ENCODE measurements at regions of chr6 and their contacts with region 1.

Region 1: DNA sequence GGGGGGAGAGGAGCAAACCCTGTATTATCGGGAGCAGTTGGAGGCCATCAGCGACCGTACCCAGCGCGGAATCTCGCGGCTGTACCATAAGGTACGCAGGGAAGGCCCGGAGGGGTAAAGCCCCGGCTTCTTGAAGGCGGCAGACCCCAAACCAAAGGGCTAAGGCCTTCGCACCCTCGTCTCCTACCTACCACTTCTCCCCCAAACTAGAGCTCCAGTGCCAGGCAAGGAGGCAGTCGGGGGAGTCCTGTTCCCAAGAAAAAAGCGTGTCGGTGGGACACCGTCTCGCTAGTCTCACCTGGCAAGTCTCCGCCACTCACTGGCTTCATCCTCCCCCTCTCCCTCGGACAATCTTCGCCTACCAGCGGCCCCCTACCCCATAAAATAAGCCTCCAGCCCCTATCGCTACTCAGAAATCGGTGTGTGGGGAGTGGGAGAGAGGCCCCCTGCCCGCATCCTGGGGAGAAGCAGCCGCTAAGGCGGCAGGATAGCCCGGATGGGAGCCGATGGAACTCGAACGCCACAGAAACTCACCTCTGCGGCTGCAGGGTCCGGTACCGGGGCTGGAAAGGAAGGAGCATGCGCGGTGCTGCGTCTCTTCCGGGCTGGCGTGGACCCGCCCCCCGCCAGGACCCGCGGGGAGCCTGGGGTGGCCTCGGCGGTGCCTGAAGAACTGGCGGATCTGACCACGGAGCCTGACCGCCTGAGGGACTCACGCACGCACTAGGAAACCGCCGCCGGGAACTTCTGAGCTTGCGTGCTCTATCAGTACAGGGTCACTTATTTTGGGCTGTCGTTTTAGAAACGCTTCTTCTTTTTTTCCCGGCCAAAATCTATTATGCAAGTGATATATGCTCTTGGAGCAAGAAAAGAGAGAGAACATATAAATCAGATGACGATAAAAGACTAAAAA is at the start of gene RPS10:
- DNase-seq: peak; percentile 90 to 97 (median 93)
- H3K4me3 ChIP-seq: peak within 1 kb of the TSS; percentile 65
- H3K27ac ChIP-seq: peak within 1 kb of the TSS; percentile 31 to 76
- H3K4me1 ChIP-seq: peaks cover 3% of the 10 kb centered on the region
- H3K27me3 ChIP-seq: no peaks in the 10 kb centered on the region
- CTCF ChIP-seq: no peak
- EP300 ChIP-seq: no peak
- POLR2A ChIP-seq: peak; percentile 76
- total RNA-seq, gene RPS10: 2,362 to 10,077 (median 2,497) TPM

Region 2: GRCh38 chr6:34358389-34358905 is 67.3 kb before region 1 on chr6:
- intact Hi-C with region 1: no loop called
- DNase-seq: peak; percentile 27 to 69 (median 44)
- H3K4me3 ChIP-seq: no peak overlapping the region
- H3K27ac ChIP-seq: no peak overlapping the region
- H3K4me1 ChIP-seq: peaks cover 2% of the 10 kb centered on the region
- H3K27me3 ChIP-seq: no peaks in the 10 kb centered on the region
- CTCF ChIP-seq: no peak
- EP300 ChIP-seq: no peak
- POLR2A ChIP-seq: no peak

Region 3: DNA sequence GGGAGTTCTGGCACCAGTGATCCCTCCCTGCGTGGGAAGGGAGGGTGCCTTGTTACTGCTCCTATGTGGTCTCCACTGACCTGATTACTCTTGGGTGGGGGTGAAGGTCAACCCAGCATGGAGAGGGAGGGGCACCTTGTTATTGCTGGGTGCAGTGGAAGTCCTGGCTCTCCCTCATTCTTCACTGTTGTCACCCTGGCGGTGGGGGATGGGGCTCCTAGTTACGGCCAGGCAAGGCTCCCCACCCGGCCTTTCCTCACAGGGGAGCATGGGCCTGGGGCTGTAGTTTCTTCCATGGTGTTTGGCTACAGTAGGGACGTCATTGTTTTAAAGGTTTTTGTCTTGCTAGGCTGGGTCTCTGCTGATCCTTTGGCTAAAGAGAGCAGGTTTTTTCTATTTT is 81.0 kb after region 1 on chr6:
- intact Hi-C with region 1: loop called in 1 of 4 experiments (anchors 2 kb)
- DNase-seq: peak in 1 of 5 donors; percentile 7
- H3K4me3 ChIP-seq: no peak overlapping the region
- H3K27ac ChIP-seq: no peak overlapping the region
- H3K4me1 ChIP-seq: no peaks in the 10 kb centered on the region
- H3K27me3 ChIP-seq: no peaks in the 10 kb centered on the region
- CTCF ChIP-seq: no peak
- EP300 ChIP-seq: no peak
- POLR2A ChIP-seq: no peak

Region 4: DNA sequence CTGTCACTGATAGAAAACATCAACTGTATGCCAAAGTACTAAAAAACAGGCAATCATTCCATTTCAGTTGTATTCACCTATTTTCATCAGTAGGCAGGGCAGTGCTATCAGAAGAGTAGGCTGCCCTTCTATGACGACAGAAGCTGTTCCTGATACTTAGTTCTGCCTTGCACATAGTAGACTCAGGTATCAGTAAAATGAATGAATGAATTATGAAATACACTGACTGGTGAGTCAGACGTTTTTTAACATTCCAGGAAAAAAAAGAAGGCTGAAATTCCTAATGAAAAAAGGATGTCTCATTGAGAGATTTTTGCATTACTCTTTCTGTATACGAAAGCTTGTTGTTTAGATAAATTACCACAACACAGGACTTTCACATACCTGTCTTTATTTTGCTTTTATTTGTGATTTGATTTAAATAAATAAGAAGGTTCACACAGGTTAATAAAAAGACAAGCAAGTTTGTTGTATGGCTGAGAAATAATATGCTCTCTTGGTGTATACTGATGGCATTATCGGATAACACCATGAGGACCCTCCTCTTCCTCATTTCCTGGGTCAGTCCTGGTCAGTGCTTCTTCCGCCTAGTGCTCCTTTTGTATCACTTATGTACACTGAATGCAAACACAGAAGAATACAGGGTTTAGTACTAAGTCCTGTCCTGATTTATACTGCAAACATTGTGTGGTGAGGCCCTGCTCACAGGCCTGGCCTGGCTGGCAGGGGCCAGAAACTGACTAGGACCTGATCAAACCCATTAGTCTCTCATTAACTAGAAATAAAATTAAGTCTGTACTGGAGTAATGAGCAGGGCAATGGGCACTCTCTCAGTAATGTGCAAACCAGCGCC is 169.8 kb after region 1 on chr6:
- intact Hi-C with region 1: no loop called
- DNase-seq: no peak
- H3K4me3 ChIP-seq: no peak overlapping the region
- H3K27ac ChIP-seq: no peak overlapping the region
- H3K4me1 ChIP-seq: peaks cover 17% of the 10 kb centered on the region
- H3K27me3 ChIP-seq: no peaks in the 10 kb centered on the region
- CTCF ChIP-seq: no peak
- EP300 ChIP-seq: no peak
- POLR2A ChIP-seq: no peak

Region 5: GRCh38 chr6:34610819-34611477 is 185.2 kb after region 1 on chr6:
- intact Hi-C with region 1: loop called in 1 of 4 experiments (anchors 10 kb)
- DNase-seq: no peak
- H3K4me3 ChIP-seq: no peak overlapping the region
- H3K27ac ChIP-seq: no peak overlapping the region
- H3K4me1 ChIP-seq: no peaks in the 10 kb centered on the region
- H3K27me3 ChIP-seq: no peaks in the 10 kb centered on the region
- CTCF ChIP-seq: no peak
- EP300 ChIP-seq: no peak
- POLR2A ChIP-seq: no peak

Measured in ovary (tissue), 10 donors.